ENCODE measurements at regions of chr9 and their contacts with region 1.

Region 1: GRCh38 chr9:111427186-111427585 is 57.0 kb downstream of the ECPAS start:
- DNase-seq: no peak
- H3K4me3 Mint-ChIP-seq: no peak overlapping the region
- H3K27ac Mint-ChIP-seq: peak overlapping the region; percentile 49
- H3K4me1 Mint-ChIP-seq: peaks cover 12% of the 10 kb centered on the region
- H3K27me3 Mint-ChIP-seq: no peaks in the 10 kb centered on the region

Region 2: DNA sequence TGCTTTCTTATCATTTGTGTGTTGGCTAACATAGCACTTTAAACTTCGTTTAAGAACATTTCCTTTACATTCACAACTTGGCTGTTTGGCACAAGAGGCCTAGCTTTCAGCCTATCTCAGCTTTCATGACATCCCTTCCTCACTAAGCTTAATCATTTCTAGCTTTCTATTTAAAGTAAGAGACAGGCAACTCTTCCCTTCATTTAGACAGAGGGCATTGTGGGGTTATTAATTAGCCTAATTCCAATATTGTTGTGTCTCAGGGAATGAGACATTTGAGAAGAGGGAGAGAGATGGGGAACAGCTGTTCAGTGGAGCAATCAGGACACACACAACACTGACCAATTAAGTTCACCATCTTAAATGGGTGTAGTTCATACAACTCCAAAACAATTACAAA is 46.2 kb before region 1 on chr9:
- intact Hi-C with region 1: loop called (anchors 5 kb)
- DNase-seq: no peak
- H3K4me3 Mint-ChIP-seq: no peak overlapping the region
- H3K27ac Mint-ChIP-seq: no peak overlapping the region
- H3K4me1 Mint-ChIP-seq: no peaks in the 10 kb centered on the region
- H3K27me3 Mint-ChIP-seq: no peaks in the 10 kb centered on the region

Measured in activated T-helper 1 cell treated with anti-CD3 and anti-CD28 coated beads, Interleukin-12 subunit alpha, Interleukin-12 subunit beta, Interleukin-2, Interleukin-4 antibody, amounts not matched to agents 30 ng/mL and 10 ng/mL and 1 ng/mL, durations not matched to agents 14 hours and 24 hours and 36 hours (primary cell).